GM12878 (cell line): ENCODE measurements at regions of chr12 and their contacts with region 1.

Region 1: DNA sequence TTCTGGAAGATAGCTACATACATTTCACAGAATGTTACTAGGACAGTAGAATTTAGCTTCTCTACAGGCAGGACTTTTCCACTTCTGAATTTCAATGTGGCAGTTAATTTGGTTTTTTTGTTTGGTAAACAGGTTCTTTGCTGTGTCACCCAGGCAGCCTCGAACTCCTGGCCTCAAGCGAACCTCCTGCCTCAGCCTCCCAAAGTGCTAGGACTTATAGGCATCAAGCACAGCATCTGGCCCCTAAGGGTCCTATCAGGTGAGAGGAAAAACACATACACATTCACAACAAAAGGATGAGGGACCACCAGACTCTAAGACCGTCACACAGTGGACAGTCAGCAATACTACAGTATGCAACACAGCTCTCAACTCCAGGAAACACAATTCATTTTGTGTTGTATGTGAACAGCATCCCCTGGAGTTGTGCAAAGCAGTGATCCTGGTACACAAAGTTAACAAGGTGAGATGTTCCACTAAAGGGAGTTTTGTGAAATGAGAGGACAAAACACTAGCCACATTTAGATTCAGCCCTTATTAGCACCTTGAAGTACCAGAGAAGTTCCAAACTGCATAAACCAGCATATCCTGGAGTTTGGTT is 6.9 kb downstream of the ATP2B1 start:
- DNase-seq: no peak
- ATAC-seq: peak; percentile 10
- H3K4me3 ChIP-seq: no peak overlapping the region
- H3K27ac ChIP-seq: no peak overlapping the region
- H3K4me1 ChIP-seq: peaks cover 8% of the 10 kb centered on the region
- H3K27me3 ChIP-seq: no peaks in the 10 kb centered on the region
- CTCF ChIP-seq: peak in 2 of 3 experiments; percentile 20 to 35; a peak in 4 of 6 replicates
- EP300 ChIP-seq: no peak
- POLR2A ChIP-seq: no peak
- RAD21 ChIP-seq: no peak

Region 2: GRCh38 chr12:89621521-89621920 is 80.2 kb before region 1 on chr12:
- CTCF ChIA-PET with region 1: interaction called, 4 read pairs
- POLR2A ChIA-PET with region 1: no interaction called
- RAD21 ChIA-PET with region 1: interaction called, 3 read pairs
- SMC1A ChIA-PET with region 1: interaction called, 5 read pairs
- in situ Hi-C with region 1: no loop called
- intact Hi-C with region 1: loop called (anchors 5 kb)
- DNase-seq: no peak
- ATAC-seq: no peak
- H3K4me3 ChIP-seq: no peak overlapping the region
- H3K27ac ChIP-seq: no peak overlapping the region
- H3K4me1 ChIP-seq: no peaks in the 10 kb centered on the region
- H3K27me3 ChIP-seq: no peaks in the 10 kb centered on the region
- CTCF ChIP-seq: no peak
- EP300 ChIP-seq: no peak
- POLR2A ChIP-seq: no peak
- RAD21 ChIP-seq: no peak

Region 3: DNA sequence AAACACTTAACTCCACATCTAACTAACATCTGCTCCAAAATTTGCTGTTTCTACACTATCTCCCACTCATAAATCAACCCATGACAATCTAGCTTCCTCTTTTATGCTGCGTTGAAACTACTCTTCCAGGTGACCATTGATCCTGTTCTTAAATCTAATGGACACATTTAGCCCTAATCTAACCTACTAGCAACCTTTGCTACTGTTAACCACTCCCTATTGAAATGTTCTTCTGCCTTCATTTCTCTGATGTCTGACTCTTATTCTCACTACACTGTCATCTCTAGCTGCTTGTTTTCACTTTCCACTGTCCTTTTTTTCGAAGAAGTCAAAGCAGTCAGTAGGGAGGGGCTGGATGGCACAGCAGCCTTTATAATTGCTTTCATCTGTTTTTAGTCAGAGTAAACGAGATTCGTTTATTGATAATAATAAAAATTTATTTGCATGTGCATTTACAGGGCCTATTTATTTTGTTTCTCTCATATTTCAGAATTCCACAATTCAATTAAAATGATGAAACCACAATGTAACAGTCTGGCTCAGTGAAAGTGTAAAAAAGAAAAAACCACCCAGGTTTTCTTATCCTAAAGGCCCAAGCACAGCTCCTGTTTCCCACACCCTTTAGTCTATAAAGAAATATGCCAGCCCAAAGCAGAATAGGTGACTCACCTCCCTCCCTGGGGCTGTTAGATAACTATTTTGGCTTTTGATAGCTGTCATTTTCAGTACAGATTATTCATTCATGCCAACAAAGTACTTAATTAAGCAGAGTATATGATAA is 37.9 kb before region 1 on chr12:
- CTCF ChIA-PET with region 1: interaction called, 8 read pairs
- POLR2A ChIA-PET with region 1: interaction called, 7 read pairs
- RAD21 ChIA-PET with region 1: interaction called, 26 read pairs
- SMC1A ChIA-PET with region 1: interaction called, 70 read pairs
- in situ Hi-C with region 1: no loop called
- intact Hi-C with region 1: loop called (anchors 2 kb)
- DNase-seq: peak; percentile 37
- ATAC-seq: peak; percentile 79
- H3K4me3 ChIP-seq: peak overlapping the region; percentile 3; the same call in 1 of the 2 replicates
- H3K27ac ChIP-seq: peak overlapping the region; percentile 5; the same call in 1 of the 2 replicates
- H3K4me1 ChIP-seq: peaks cover 26% of the 10 kb centered on the region; the same call in 1 of the 2 replicates
- H3K27me3 ChIP-seq: no peaks in the 10 kb centered on the region
- CTCF ChIP-seq: no peak
- EP300 ChIP-seq: no peak
- POLR2A ChIP-seq: no peak
- RAD21 ChIP-seq: no peak

Region 4: DNA sequence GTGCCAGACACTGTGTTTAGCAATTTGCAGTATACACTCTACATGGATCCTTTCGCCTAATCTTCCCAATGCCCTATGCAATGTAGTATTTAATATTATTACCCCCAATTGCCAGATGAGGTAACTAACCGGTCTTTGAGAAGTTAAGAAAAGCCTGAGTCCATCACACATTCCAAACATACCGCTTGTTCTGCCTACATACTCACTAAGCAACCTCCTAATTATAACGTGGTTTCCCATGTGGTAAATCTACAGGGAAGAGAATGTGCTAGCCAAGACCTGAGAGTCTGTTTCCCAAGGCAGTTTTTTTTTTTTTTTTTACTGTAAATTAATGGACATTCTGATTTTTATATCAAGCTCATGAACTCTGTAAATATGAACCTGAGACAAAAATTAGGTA is 30.2 kb before region 1 on chr12:
- CTCF ChIA-PET with region 1: interaction called, 10 read pairs
- POLR2A ChIA-PET with region 1: interaction called, 3 read pairs
- RAD21 ChIA-PET with region 1: interaction called, 26 read pairs
- SMC1A ChIA-PET with region 1: interaction called, 70 read pairs
- in situ Hi-C with region 1: no loop called
- intact Hi-C with region 1: no loop called
- DNase-seq: no peak
- ATAC-seq: no peak
- H3K4me3 ChIP-seq: no peak overlapping the region
- H3K27ac ChIP-seq: no peak overlapping the region
- H3K4me1 ChIP-seq: peaks cover 21% of the 10 kb centered on the region; the same call in 1 of the 2 replicates
- H3K27me3 ChIP-seq: no peaks in the 10 kb centered on the region
- CTCF ChIP-seq: no peak
- EP300 ChIP-seq: no peak
- POLR2A ChIP-seq: no peak
- RAD21 ChIP-seq: no peak

Region 5: GRCh38 chr12:90013409-90013808 is 311.7 kb after region 1 on chr12:
- CTCF ChIA-PET with region 1: interaction called, 5 read pairs
- POLR2A ChIA-PET with region 1: no interaction called
- RAD21 ChIA-PET with region 1: interaction called, 18 read pairs
- SMC1A ChIA-PET with region 1: interaction called, 21 read pairs
- in situ Hi-C with region 1: no loop called
- intact Hi-C with region 1: loop called (anchors 5 kb)
- DNase-seq: peak; percentile 8
- ATAC-seq: peak; percentile 94
- H3K4me3 ChIP-seq: no peak overlapping the region
- H3K27ac ChIP-seq: no peak overlapping the region
- H3K4me1 ChIP-seq: no peaks in the 10 kb centered on the region
- H3K27me3 ChIP-seq: no peaks in the 10 kb centered on the region
- CTCF ChIP-seq: peak; percentile 45 to 73 (median 54); a peak in 5 of 6 replicates
- EP300 ChIP-seq: no peak
- POLR2A ChIP-seq: no peak
- RAD21 ChIP-seq: peak; percentile 60